Naive thymus-derived CD4-positive, alpha-beta T cell (primary cell): ENCODE measurements at regions of chr2 and their contacts with region 1.

Region 1: DNA sequence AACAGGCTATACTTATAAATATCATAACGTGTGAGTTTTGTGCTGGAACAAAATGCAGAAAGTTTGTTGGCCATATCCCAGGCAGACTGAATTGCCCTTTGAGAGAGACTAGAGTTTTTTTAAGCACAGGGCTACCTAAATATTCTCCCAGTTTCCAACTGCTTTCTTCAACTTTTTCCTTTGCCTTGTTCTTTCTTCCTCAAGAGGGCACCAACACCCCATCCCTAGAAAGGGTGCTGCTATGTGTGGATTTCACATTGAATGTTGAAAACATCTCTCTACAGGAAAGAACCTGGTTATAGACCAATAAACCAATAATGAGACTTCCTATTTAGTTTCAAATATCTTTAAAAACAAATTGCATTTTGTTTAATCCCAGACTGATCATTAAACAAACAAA is 87.9 kb downstream of the ICOS start:
- DNase-seq: no peak
- ATAC-seq: no peak
- H3K4me3 ChIP-seq: no peak overlapping the region
- H3K4me3 Mint-ChIP-seq: no peak overlapping the region
- H3K27ac ChIP-seq: no peak overlapping the region
- H3K27ac Mint-ChIP-seq: peak overlapping the region in 1 of 9 donors; percentile 28
- H3K4me1 ChIP-seq: peaks cover 0 to 7% of the 10 kb centered on the region in 2 donors
- H3K4me1 Mint-ChIP-seq: peaks cover 0 to 56% (median 20%) of the 10 kb centered on the region in 7 donors
- H3K27me3 ChIP-seq: no peaks in the 10 kb centered on the region
- H3K27me3 Mint-ChIP-seq: no peaks in the 10 kb centered on the region

Region 2: DNA sequence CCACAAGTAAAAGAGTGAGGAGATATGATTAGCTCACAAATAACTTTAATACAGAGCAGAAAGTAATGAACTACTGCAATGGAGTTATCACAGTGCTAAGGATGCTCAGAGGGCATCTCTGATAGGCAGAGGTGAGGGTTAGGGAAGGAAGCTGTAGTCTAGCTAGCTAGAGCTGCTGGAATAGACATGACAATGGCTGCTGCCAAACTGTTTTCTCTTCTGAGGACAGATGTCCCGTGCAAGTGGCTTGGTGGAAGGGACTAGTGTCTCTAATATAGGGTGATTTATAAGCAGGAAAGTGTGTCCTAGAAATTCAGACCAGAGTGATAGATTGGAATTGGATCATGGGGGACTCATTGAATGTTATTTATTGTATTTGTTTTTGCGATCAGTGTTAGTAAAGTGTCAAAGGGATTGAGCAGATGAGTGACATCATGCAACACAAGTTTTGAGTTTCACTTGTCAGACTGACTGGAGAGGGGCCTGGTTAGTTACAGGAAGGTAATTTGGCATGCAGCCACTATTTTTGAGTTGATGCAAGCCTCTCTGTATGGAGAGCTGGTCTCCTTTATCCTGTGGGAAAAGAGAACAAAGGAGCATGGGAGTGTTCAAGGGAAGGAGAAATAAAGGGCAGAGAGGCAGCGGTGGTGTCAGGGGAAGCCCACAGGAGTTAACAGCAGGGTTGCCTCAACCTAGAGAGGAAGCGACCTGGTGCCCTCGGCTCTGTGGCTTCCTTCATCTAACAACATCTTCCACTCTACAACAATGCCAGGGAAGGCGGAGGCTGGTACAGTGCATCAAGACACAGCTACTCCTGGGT is 155.1 kb before region 1 on chr2:
- CTCF ChIA-PET with region 1: no interaction called
- POLR2A ChIA-PET with region 1: no interaction called
- intact Hi-C with region 1: no loop called
- DNase-seq: peak; percentile 27 to 80 (median 70)
- ATAC-seq: peak; percentile 89
- H3K4me3 ChIP-seq: peak overlapping the region; percentile 52
- H3K4me3 Mint-ChIP-seq: peak overlapping the region; percentile 77 to 96 (median 82)
- H3K27ac ChIP-seq: peak overlapping the region; percentile 79
- H3K27ac Mint-ChIP-seq: peak overlapping the region; percentile 80 to 99 (median 95)
- H3K4me1 ChIP-seq: peaks cover 55 to 61% of the 10 kb centered on the region in 2 donors
- H3K4me1 Mint-ChIP-seq: peaks cover 44 to 91% (median 83%) of the 10 kb centered on the region in 7 donors
- H3K27me3 ChIP-seq: no peaks in the 10 kb centered on the region
- H3K27me3 Mint-ChIP-seq: no peaks in the 10 kb centered on the region

Region 3: DNA sequence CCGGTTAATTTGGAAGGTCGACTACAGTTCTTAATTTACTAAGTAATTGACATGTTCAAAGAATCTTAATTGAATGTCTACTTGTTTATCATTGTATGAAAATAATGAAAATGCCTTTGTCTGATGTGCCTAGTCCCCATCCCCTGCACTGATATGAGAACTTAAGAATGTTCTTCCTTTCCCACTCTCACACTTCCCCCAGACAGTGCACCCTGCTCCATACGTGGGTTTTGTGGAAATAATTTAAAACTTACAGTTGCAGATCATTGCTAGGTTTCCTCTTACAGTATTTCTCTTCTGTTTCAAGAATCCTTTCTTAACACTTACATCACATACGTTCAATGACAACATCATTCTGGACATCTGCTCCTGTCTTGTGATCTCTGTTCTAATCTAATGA is 84.5 kb before region 1 on chr2:
- CTCF ChIA-PET with region 1: no interaction called
- POLR2A ChIA-PET with region 1: no interaction called
- intact Hi-C with region 1: loop called in 1 of 2 experiments (anchors 2 kb)
- DNase-seq: no peak
- ATAC-seq: peak; percentile 23
- H3K4me3 ChIP-seq: peak overlapping the region; percentile 80
- H3K4me3 Mint-ChIP-seq: peak overlapping the region; percentile 89 to 99 (median 94)
- H3K27ac ChIP-seq: peak overlapping the region; percentile 87
- H3K27ac Mint-ChIP-seq: peak overlapping the region; percentile 83 to 98 (median 91)
- H3K4me1 ChIP-seq: peaks cover 28 to 46% of the 10 kb centered on the region in 2 donors
- H3K4me1 Mint-ChIP-seq: peaks cover 43 to 69% (median 64%) of the 10 kb centered on the region in 7 donors
- H3K27me3 ChIP-seq: no peaks in the 10 kb centered on the region
- H3K27me3 Mint-ChIP-seq: no peaks in the 10 kb centered on the region

Region 4: DNA sequence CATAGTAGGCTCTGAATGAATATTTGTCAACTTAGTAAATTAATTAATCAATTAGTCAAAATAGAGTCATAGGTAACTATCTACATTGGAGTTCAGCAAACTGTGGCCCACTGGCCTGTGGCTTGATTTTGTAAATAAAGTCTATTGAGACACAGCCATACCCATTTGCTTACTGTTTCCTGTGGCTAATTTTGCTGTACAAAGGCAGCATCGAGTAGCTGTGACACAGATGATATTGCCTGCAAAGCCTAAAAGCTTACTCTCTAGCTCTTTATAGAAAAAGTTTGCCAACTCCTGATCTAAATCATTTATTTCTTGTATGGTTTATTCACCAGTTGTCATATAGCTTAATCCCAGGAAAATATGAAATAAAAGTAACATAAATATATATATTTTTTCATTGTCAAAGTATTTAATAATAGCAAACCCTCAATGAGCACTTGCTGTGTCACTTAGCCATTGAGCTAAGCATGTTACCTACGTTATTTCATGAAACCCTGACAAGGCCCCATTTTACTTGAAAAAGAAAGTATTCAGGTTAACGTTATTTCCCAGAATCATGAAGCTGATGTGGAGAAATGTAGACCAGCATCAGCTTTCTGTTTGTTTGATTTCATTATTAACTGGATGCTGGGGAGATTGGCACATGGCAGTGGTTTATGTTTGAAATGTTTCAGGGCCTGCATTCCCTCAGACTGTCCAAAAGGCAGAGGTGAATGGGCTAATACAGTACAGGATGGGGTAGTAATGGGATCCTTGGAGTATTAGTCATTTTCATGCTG is 18.4 kb before region 1 on chr2:
- CTCF ChIA-PET with region 1: interaction called, 4 read pairs
- POLR2A ChIA-PET with region 1: no interaction called
- intact Hi-C with region 1: loop called in 1 of 2 experiments (anchors 1 kb)
- DNase-seq: peak in 1 of 9 donors; percentile 23
- ATAC-seq: no peak
- H3K4me3 ChIP-seq: no peak overlapping the region
- H3K4me3 Mint-ChIP-seq: peak overlapping the region in 5 of 10 donors; percentile 17 to 59 (median 44)
- H3K27ac ChIP-seq: no peak overlapping the region
- H3K27ac Mint-ChIP-seq: peak overlapping the region in 5 of 9 donors; percentile 60 to 93 (median 83)
- H3K4me1 ChIP-seq: peaks cover 9 to 37% of the 10 kb centered on the region in 2 donors
- H3K4me1 Mint-ChIP-seq: peaks cover 24 to 81% (median 78%) of the 10 kb centered on the region in 7 donors
- H3K27me3 ChIP-seq: no peaks in the 10 kb centered on the region
- H3K27me3 Mint-ChIP-seq: no peaks in the 10 kb centered on the region

Region 5: GRCh38 chr2:204051476-204051875 is 27.0 kb after region 1 on chr2:
- CTCF ChIA-PET with region 1: interaction called, 4 read pairs
- POLR2A ChIA-PET with region 1: no interaction called
- intact Hi-C with region 1: loop called in 1 of 2 experiments (anchors 1 kb)
- DNase-seq: peak in 4 of 9 donors; percentile 15 to 28 (median 20)
- ATAC-seq: no peak
- H3K4me3 ChIP-seq: no peak overlapping the region
- H3K4me3 Mint-ChIP-seq: no peak overlapping the region
- H3K27ac ChIP-seq: no peak overlapping the region
- H3K27ac Mint-ChIP-seq: no peak overlapping the region
- H3K4me1 ChIP-seq: no peaks in the 10 kb centered on the region
- H3K4me1 Mint-ChIP-seq: peaks cover 0 to 15% (median 4%) of the 10 kb centered on the region in 7 donors
- H3K27me3 ChIP-seq: no peaks in the 10 kb centered on the region
- H3K27me3 Mint-ChIP-seq: peaks cover 0 to 14% (median 0%) of the 10 kb centered on the region in 5 donors

Region 6: DNA sequence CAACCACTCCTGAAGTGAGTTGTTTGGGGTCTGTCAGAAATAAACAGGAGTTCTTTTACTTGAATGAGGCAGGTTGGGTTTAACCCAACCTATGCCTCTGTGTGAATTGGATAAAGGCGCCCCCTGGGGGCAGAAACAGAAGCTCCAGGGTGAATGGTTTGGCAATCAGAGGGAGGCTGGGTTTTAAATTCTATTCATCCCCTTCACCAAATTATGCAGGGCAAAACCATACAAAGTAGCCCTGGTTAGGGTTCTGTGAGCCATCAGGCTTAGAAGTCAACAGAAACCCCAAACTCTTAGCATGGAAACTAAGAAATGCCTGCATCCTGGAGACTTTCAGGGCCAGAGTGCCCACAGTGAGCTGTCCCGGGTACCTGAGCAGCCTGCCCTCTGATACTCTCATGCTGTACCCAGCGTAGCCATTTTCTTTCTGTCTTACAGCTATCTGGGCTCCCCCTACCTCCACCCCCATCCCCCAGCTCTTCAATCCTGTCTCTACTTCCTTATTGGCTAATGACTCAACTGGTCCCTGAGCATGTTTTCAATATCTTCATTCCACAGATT is 153.6 kb after region 1 on chr2:
- CTCF ChIA-PET with region 1: no interaction called
- POLR2A ChIA-PET with region 1: no interaction called
- intact Hi-C with region 1: loop called (anchors 1 kb)
- DNase-seq: peak; percentile 35 to 75 (median 63)
- ATAC-seq: peak; percentile 73
- H3K4me3 ChIP-seq: no peak overlapping the region
- H3K4me3 Mint-ChIP-seq: no peak overlapping the region
- H3K27ac ChIP-seq: no peak overlapping the region
- H3K27ac Mint-ChIP-seq: no peak overlapping the region
- H3K4me1 ChIP-seq: no peaks in the 10 kb centered on the region
- H3K4me1 Mint-ChIP-seq: peaks cover 0 to 10% (median 0%) of the 10 kb centered on the region in 7 donors
- H3K27me3 ChIP-seq: no peaks in the 10 kb centered on the region
- H3K27me3 Mint-ChIP-seq: peaks cover 8 to 36% (median 12%) of the 10 kb centered on the region in 5 donors

Region 7: DNA sequence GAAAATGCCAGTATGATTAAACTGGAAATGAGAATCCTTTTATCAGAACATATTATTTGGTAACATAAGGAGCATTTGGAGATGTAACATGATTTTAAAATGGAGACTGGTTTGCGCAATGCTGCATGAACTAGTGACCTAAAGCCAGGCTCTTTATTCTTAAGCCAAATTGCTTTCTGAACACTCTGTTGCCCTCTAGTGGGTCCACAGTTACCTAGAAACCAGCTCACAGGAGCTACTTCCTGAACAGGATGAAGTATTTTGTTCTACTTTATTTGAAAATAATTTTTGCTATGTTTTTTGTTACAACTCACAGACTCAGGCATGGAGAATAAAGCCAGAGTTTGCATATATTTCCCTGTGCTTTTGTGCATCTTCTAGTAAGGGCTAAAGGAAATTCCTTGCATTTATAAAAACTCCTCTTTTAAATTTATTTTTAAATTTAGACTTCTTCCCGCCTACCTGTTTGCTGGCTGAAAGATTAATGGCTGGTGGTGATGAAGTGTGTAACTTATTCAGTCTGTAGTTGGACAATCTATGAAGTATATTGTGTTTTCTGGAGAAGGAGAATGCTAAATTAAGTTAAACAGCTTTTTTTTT is 667.5 kb after region 1 on chr2:
- CTCF ChIA-PET with region 1: no interaction called
- POLR2A ChIA-PET with region 1: no interaction called
- intact Hi-C with region 1: loop called in 1 of 2 experiments (anchors 5 kb)
- DNase-seq: peak in 6 of 9 donors; percentile 4 to 42 (median 26)
- ATAC-seq: peak; percentile 55
- H3K4me3 ChIP-seq: no peak overlapping the region
- H3K4me3 Mint-ChIP-seq: no peak overlapping the region
- H3K27ac ChIP-seq: no peak overlapping the region
- H3K27ac Mint-ChIP-seq: no peak overlapping the region
- H3K4me1 ChIP-seq: peaks cover 0 to 6% of the 10 kb centered on the region in 2 donors
- H3K4me1 Mint-ChIP-seq: peaks cover 0 to 15% (median 9%) of the 10 kb centered on the region in 7 donors
- H3K27me3 ChIP-seq: no peaks in the 10 kb centered on the region
- H3K27me3 Mint-ChIP-seq: peaks cover 0 to 13% (median 0%) of the 10 kb centered on the region in 5 donors